Heart left ventricle (tissue), 16 donors: ENCODE measurements at regions of chr16 and their contacts with region 1.

Region 1: GRCh38 chr16:19810817-19811731 is 73.6 kb downstream of the GPRC5B start:
- DNase-seq: no peak
- ATAC-seq: peak in 3 of 4 donors; percentile 23 to 48 (median 30)
- H3K4me3 ChIP-seq: no peak overlapping the region
- H3K27ac ChIP-seq: peak overlapping the region in 8 of 12 donors; percentile 2 to 68 (median 40)
- H3K4me1 ChIP-seq: peaks cover 0 to 38% (median 20%) of the 10 kb centered on the region in 12 donors
- H3K27me3 ChIP-seq: no peaks in the 10 kb centered on the region
- CTCF ChIP-seq: no peak
- POLR2A ChIP-seq: no peak

Region 2: DNA sequence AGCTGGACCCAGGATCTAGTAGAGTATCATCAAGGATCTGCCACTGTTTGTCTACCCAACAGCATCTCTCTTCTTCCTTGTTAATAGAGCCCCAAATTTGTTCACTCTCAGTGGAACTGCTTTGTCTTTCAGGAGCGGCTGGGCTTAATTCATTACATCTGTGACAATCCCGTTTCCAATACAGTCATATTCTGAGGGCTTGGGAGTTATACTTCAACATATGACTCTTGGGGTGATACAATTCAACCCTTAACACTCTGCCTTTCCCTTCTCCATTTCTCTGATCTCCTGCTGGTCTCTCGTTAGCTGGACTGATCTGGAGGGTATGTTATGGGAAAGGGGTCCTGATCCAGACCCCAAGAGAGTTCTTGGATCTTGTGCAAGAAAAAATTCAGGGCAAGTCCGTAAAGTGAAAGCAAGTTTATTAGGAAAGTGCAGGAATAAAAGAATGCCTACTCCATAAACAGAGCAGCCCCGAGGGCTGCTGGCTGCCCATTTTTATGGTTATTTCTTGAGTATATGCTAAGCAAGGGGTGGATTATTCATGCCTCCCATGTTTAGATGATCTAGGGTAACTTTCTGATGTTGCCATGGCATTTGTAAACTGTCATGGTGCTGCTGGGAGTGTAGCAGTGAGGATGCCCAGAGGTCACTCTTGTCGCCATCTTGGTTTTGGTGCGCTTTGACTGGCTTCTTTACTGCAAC is 50.6 kb before region 1 on chr16:
- intact Hi-C with region 1: loop called in 2 of 10 experiments (anchors 5 to 10 kb)
- DNase-seq: no peak
- ATAC-seq: no peak
- H3K4me3 ChIP-seq: no peak overlapping the region
- H3K27ac ChIP-seq: peak overlapping the region in 6 of 12 donors; percentile 6 to 54 (median 46)
- H3K4me1 ChIP-seq: peaks cover 0 to 29% (median 13%) of the 10 kb centered on the region in 12 donors
- H3K27me3 ChIP-seq: no peaks in the 10 kb centered on the region
- CTCF ChIP-seq: no peak
- POLR2A ChIP-seq: no peak

Region 3: DNA sequence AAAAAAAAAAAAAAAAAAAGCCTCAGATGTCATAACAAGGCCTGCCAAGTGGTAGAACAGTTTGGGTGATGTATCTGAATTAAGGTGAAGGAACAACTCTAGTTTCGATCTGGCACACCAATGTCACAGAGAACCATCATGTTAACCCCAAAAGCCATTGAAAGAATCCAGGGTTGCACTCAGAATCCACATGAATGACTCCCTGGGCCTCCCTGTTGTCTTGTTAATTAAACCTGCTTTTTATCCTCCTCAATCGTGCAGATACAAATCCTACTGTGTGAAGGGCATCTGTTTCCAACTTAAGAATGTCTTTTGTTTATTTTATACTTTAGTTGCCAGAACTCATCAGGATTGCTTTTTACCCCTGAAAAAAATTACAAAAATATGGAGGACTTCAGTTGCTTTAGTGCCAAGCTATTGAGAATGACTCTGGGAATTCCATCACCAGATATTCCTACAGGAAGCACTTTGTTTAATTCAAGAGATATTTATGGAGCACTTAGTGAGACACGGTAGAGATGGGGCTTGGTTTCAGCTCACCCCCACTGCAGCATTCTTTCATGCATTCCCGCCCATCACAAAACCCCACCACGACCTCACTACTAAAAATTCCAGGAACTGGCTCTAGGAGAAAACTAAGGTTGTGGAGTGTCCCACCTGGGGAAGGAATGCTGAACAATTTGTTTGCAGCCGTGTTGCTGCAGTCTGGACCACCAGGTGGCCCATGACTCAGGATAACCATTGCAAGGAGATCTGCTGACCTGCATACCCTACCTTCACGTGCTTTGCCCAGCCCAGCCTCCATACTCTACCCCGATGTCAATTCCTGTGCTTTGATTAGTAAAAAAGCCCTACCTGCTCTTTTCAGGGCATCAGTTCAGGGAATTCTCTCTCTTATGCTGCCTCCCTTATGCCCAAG is 137.4 kb after region 1 on chr16:
- intact Hi-C with region 1: no loop called
- DNase-seq: no peak
- ATAC-seq: no peak
- H3K4me3 ChIP-seq: no peak overlapping the region
- H3K27ac ChIP-seq: no peak overlapping the region
- H3K4me1 ChIP-seq: no peaks in the 10 kb centered on the region
- H3K27me3 ChIP-seq: peaks cover 0 to 33% (median 0%) of the 10 kb centered on the region in 9 donors
- CTCF ChIP-seq: no peak
- POLR2A ChIP-seq: no peak